ENCODE measurements at regions of chr2 and their contacts with region 1.

Region 1: DNA sequence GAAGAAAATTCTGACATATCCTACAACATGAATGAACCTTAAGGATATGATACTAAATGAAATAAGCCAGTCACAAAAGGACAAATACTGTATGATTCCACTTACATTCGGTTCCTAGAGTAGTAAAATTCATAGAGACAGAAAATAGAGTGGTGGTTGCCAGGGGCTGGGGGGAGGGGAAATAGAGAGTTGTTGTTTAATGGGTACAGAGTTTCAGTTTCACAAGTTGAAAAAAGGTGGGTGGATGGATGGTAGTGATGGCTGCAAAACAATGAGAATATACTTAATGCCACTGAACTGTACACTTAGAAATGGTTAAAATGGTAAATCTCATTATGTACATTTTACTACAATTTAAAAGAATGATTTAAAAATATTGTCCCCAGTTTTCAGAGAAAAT is 53.3 kb upstream of the NFU1 start:
- DNase-seq: peak; percentile 79
- H3K4me3 Mint-ChIP-seq: peak overlapping the region; percentile 5
- H3K27ac Mint-ChIP-seq: peak overlapping the region; percentile 81
- H3K4me1 Mint-ChIP-seq: peaks cover 32% of the 10 kb centered on the region
- H3K27me3 Mint-ChIP-seq: no peaks in the 10 kb centered on the region

Region 2: DNA sequence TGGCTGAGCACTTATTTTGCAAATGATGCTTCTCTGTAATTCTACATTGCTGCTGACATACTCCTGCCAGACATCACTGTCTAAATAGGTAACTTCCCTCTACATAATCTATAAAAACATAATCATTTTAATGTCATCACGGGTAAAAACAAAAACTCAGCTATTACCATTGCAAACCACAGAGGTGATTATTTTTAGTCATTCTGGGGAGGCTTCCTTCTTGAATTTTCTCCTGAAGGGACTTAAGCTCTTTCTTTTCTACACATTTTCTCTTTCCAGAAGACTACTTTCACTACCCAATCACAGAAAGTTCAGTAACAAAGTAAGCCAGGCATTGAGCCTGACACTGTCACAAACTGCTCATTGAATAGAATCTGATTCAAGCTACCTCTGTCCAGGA is 12.9 kb before region 1 on chr2:
- intact Hi-C with region 1: loop called (anchors 2 kb)
- DNase-seq: no peak
- H3K4me3 Mint-ChIP-seq: no peak overlapping the region
- H3K27ac Mint-ChIP-seq: peak overlapping the region; percentile 2
- H3K4me1 Mint-ChIP-seq: peaks cover 32% of the 10 kb centered on the region
- H3K27me3 Mint-ChIP-seq: no peaks in the 10 kb centered on the region

Region 3: DNA sequence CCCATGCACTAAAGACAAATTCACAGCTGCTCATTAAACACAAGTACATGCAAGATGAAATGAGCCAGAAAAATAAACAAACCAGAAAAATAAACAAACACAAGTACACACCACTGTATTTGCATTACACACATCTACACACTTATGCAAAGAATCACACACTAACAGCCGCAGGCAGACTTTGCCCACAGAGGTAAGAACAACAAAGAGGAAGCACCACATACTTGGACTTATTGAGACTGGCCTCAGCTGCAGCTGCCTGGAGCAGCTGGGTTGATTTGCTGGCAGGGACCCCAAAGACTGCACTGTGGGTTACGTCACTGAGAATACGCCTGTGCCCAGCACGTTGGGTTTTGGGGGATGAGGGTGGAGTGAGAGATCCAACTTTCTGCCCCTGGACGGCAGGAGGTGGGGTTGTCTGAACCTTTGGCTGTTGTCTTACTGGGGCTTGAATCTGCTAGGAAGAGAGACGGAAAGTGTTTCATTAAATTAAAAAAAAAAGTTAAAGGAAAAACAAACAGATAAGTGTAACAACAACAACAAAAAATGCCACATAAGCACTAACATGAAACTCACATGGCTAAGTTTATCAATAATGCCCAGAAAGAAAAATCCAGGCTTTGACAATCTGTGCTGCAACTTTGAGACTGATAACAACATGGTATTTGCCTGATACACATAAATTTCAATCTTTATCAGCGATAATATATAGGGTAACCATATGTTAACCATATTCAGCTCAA is 18.7 kb after region 1 on chr2:
- intact Hi-C with region 1: loop called (anchors 1 kb)
- DNase-seq: no peak
- H3K4me3 Mint-ChIP-seq: peak overlapping the region; percentile 20
- H3K27ac Mint-ChIP-seq: peak overlapping the region; percentile 88
- H3K4me1 Mint-ChIP-seq: peaks cover 33% of the 10 kb centered on the region
- H3K27me3 Mint-ChIP-seq: no peaks in the 10 kb centered on the region

Region 4: DNA sequence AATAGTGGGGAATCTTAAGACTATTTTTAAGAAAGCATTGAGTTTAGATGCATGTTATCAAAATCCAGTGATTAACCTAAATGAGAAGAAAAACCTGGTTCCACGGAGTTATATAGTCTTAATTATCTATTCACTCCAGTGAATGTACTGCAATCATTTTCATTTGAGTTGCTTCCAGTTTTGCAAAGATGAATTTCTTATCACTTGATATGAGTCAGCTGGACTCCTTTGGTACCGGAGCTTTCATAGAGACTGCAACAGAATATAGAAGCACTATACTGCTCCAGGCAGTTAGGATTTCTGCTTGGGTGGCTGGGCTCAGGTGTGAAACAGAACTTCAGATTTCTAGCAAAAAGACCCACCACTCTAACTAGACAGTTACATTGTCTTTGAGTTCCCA is 39.0 kb after region 1 on chr2:
- intact Hi-C with region 1: loop called (anchors 2 kb)
- DNase-seq: no peak
- H3K4me3 Mint-ChIP-seq: no peak overlapping the region
- H3K27ac Mint-ChIP-seq: no peak overlapping the region
- H3K4me1 Mint-ChIP-seq: peaks cover 2% of the 10 kb centered on the region
- H3K27me3 Mint-ChIP-seq: no peaks in the 10 kb centered on the region

Measured in activated CD4-positive, alpha-beta T cell treated with anti-CD3 and anti-CD28 coated beads, Interleukin-2, amount 10 ng/mL, durations not matched to agents 24 days and 14 days (primary cell).